ENCODE measurements at regions of chr11 and their contacts with region 1.

Region 1: DNA sequence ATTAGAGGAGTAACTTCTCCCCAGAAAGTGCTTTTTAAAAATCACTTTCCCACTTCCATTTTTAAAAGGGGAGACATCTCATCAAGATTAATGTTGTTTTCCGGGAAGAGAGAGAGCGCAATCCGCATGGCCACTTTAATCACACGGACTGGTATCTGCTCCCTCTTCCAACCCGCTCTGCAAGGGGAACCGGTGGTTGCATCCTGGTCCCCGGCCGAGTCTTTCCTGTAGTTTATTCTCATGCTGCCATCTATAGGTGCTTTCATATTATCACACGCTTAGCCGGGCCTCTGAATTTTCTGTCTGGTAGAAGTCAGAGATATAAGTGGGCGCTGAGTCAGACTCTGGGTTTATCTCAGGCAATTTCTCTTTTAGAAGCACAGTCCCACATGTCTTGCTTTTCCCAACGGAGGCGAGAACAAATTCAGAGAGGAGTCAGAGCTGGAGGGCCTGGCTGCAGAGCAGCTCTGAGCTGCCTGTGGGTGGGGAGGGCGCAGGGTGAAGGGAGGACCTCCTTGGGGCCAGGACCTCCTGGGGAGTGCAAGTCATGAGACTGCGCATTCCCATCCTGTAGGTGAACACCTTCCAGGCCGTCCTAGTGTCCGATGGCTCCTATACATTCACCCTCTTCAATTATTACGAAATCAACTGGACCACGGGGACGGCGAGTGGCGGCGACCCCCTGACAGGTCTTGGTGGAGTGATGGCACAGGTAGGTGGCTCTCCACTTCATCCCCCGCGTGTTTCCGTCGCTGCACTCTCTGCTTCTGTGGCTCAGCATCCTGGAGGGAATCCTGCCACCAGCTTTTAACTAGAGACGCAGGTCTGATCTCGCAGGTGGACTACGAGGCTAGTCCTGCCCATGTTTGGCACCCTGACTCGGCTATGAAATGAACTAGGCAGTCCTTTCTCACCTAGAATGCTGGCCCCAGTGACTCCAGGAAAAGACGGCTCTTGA is 11.7 kb downstream of the TECTA start:
- DNase-seq: peak; percentile 46 to 63
- H3K4me3 ChIP-seq: no peak overlapping the region
- H3K27ac ChIP-seq: no peak overlapping the region
- H3K4me1 ChIP-seq: no peaks in the 10 kb centered on the region
- H3K27me3 ChIP-seq: no peaks in the 10 kb centered on the region
- CTCF ChIP-seq: peak in 2 of 3 donors; percentile 49 to 52
- POLR2A ChIP-seq: no peak

Region 2: DNA sequence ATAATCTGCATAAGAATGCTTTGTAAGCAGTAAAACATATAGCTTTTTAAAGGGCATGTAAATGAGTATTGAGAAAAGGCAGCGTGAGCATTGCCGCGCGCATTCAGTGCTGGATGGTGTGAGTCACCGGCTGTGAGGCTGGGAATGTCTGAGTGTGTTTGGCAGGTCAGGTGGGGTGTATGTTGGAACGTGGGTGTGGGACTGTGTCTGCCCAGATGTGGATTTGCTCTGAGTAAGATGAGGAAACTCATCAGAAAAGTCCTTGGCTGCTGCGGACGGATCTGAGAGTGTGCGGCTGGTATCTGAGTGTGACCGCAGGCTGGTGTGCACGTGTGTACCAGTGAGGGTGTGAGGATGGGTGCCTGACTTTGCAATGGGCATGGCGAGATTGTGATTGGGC is 1317.5 kb before region 1 on chr11:
- intact Hi-C with region 1: loop called (anchors 5 kb)
- DNase-seq: no peak
- H3K4me3 ChIP-seq: no peak overlapping the region
- H3K27ac ChIP-seq: no peak overlapping the region
- H3K4me1 ChIP-seq: no peaks in the 10 kb centered on the region
- H3K27me3 ChIP-seq: no peaks in the 10 kb centered on the region
- CTCF ChIP-seq: no peak
- POLR2A ChIP-seq: no peak

Region 3: DNA sequence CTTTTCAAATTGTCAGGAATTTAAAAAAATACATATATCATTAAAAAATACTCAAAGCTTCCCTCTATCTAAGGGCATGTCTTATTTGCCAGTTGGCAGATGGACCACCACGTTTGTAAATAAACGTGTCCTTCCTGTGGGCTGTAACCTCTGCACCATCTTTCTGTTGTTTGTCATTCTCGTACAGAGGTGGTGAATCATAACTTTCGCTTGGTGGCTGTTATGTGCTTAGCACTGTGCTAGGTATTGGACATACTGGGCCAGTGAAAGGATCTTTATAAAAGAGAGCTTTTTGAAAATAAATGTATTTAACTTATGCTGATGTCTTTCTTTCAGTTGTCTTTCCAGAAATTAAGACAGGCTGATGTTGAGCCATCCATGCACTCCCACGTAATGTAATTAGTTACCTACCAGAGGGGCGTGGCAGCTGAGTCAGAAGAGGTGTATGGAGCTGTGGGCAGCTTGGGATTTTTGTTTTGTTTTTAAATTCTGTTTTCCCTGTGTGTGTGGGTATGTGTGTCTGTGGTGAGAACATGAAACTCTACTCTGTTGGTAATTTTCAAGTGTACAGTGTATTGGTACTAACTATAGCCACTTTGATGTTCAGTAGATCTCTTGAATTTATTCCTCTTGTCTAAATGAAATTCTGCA is 51.0 kb after region 1 on chr11:
- intact Hi-C with region 1: no loop called
- DNase-seq: no peak
- H3K4me3 ChIP-seq: no peak overlapping the region
- H3K27ac ChIP-seq: no peak overlapping the region
- H3K4me1 ChIP-seq: no peaks in the 10 kb centered on the region
- H3K27me3 ChIP-seq: peaks cover 0 to 4% of the 10 kb centered on the region in 2 donors
- CTCF ChIP-seq: no peak
- POLR2A ChIP-seq: no peak